ENCODE measurements at regions of chr16 and their contacts with region 1.

Region 1: DNA sequence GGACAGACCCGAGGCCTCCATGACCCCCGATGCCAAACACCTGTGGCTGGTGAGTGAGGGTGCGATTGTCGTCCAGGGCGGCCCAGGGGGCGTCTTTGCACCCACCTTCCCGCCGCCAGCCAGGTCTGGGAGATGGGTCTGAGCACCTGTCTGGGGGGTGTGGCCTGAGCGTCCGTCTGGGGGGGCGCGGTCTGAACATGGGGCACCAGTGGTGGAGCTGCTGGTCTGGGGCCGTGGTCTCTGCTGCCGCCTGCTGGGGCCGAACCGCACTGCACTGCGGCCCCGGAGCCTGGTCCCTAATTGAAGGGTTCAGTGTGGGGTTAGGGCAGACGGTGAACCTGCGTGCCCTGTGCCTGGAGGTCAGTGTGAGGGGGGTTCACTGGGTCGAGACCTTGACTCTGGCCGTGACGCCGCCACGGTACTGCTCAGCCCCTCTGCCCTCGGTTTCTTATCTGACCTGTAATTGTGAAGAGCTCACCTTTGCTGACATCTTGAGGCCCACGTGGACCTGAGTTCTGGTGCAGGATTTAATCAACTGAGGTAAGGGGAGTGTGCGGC is 12.6 kb upstream of the TCF25 start:
- DNase-seq: peak in 1 of 2 donors; percentile 91
- H3K4me3 ChIP-seq: no peak overlapping the region
- CTCF ChIP-seq: peak in 1 of 3 donors; percentile 86
- POLR2A ChIP-seq: no peak

Region 2: DNA sequence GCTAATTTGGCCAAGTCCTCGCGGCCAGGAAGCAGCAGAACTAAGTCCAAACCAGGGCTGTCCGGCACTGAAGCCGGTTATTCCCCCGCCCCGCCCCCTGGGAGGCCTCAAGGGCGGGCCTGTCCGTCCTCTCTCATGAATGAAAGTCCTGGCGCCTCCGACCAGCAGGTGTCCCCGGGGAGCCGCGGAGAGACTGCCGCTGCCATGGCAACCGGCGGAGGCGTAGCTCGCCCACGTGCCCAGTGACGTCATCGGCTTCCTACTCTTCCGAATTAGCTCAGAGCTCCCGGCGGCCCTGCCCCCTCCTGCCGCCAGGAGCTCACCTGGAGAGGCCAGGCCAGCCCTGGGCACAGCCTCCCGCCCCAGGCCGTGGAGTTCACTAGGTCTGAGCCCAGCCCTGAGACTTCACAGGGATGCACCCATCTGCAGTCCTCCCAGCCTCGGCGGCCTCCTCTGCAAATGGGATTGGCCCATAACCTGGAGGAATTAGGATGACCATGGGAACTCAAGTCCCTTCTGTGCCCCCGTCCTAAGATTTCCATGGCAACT is 160.7 kb before region 1 on chr16:
- intact Hi-C with region 1: loop called (anchors 10 kb)
- DNase-seq: peak; percentile 97 to 99
- H3K4me3 ChIP-seq: peak overlapping the region; percentile 56
- CTCF ChIP-seq: peak in 1 of 3 donors; percentile 36
- POLR2A ChIP-seq: no peak